ENCODE measurements at regions of chr1 and their contacts with region 1.

Region 1: DNA sequence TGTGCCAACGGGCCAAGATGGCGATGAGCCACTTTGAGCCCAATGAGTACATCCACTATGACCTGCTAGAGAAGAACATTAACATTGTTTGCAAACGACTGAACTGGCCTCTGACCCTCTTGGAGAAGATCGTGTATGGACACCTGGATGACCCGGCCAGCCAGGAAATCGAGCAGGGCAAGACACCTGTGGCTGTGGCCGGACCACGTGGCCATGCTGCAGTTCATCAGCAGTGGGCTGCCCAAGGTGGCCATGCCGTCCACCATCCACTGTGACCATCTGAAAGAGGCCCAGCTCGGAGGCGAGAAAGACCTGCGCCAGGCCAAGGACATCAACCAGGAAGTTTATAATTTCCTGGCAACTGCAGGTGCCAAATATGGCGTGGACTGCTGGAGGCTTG is 32.2 kb upstream of the GPR137B start:
- DNase-seq: no peak
- H3K4me3 ChIP-seq: no peak overlapping the region
- H3K27ac ChIP-seq: no peak overlapping the region
- H3K4me1 ChIP-seq: no peaks in the 10 kb centered on the region
- H3K27me3 ChIP-seq: no peaks in the 10 kb centered on the region
- CTCF ChIP-seq: no peak
- POLR2A ChIP-seq: no peak

Region 2: GRCh38 chr1:236269439-236269838 is 159.3 kb after region 1 on chr1:
- intact Hi-C with region 1: no loop called
- DNase-seq: no peak
- H3K4me3 ChIP-seq: no peak overlapping the region
- H3K27ac ChIP-seq: no peak overlapping the region
- H3K4me1 ChIP-seq: no peaks in the 10 kb centered on the region
- H3K27me3 ChIP-seq: no peaks in the 10 kb centered on the region
- CTCF ChIP-seq: no peak
- POLR2A ChIP-seq: no peak

Region 3: GRCh38 chr1:236489710-236490377 is 379.7 kb after region 1 on chr1:
- intact Hi-C with region 1: loop called (anchors 2 kb)
- DNase-seq: no peak
- H3K4me3 ChIP-seq: no peak overlapping the region
- H3K27ac ChIP-seq: no peak overlapping the region
- H3K4me1 ChIP-seq: no peaks in the 10 kb centered on the region
- H3K27me3 ChIP-seq: no peaks in the 10 kb centered on the region
- CTCF ChIP-seq: peak; percentile 58 to 59 (median 59)
- POLR2A ChIP-seq: no peak

Region 4: GRCh38 chr1:237154157-237154556 is 1044.0 kb after region 1 on chr1:
- intact Hi-C with region 1: no loop called
- DNase-seq: no peak
- H3K4me3 ChIP-seq: no peak overlapping the region
- H3K27ac ChIP-seq: no peak overlapping the region
- H3K4me1 ChIP-seq: no peaks in the 10 kb centered on the region
- H3K27me3 ChIP-seq: no peaks in the 10 kb centered on the region
- CTCF ChIP-seq: no peak
- POLR2A ChIP-seq: no peak